ENCODE measurements at regions of chr12 and their contacts with region 1.

Region 1: GRCh38 chr12:120265473-120266179 is at the start of gene PXN:
- H3K4me3 Mint-ChIP-seq: peak within 1 kb of the TSS; percentile 94
- H3K27ac Mint-ChIP-seq: peak within 1 kb of the TSS; percentile 91
- H3K4me1 Mint-ChIP-seq: peaks cover 57% of the 10 kb centered on the region
- H3K27me3 Mint-ChIP-seq: peaks cover 2% of the 10 kb centered on the region

Region 2: GRCh38 chr12:120199595-120200306 is 65.9 kb before region 1 on chr12:
- intact Hi-C with region 1: loop called (anchors 2 kb)
- H3K4me3 Mint-ChIP-seq: peak overlapping the region; percentile 91
- H3K27ac Mint-ChIP-seq: peak overlapping the region; percentile 97
- H3K4me1 Mint-ChIP-seq: peaks cover 51% of the 10 kb centered on the region
- H3K27me3 Mint-ChIP-seq: no peaks in the 10 kb centered on the region

Region 3: GRCh38 chr12:120228291-120229070 is 37.1 kb before region 1 on chr12:
- intact Hi-C with region 1: loop called (anchors 1 kb)
- H3K4me3 Mint-ChIP-seq: peak overlapping the region; percentile 34
- H3K27ac Mint-ChIP-seq: peak overlapping the region; percentile 84
- H3K4me1 Mint-ChIP-seq: peaks cover 100% of the 10 kb centered on the region
- H3K27me3 Mint-ChIP-seq: no peaks in the 10 kb centered on the region

Region 4: DNA sequence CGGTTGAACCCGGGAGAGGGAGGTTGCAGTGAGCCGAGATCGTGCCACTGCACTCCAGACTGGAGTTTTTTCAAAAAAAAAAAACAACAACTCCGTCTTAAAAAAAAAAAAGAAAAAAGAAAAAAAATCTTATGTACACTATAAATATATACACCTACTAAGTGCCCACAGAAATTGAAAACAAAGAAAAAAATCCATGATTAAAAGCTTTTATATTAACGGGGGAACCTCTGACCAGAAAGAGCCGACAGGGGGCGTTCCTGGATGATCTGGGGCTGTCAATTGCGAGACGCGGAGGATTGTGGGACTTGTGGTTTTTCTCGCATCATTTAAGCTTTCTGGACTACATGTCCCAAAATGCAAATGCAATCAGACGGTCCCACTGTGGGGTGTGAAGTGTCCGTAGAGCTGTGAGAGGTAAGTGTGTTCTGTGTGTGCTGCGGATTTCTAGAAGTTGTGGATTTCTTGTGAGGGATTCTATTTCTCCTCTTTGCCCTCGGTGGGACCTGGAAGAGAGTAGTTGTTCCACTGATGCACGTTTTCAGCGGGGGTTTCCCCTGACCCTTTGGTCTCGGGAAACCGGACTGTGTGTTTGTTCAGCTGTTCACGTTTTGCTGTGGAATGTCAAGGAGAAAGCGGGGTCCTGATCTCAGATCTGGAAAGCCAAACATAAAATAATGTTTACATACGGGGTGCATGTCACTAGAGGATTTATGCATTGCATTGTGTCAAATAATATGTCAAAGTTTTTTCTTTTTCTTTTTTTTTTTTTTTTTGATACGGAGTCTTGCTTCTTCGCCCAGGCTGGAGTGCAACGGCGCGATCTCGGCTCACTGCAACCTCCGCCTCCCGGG is 36.6 kb after region 1 on chr12 and contains the start of gene SIRT4:
- intact Hi-C with region 1: no loop called
- H3K4me3 Mint-ChIP-seq: peak within 1 kb of the TSS; percentile 84
- H3K27ac Mint-ChIP-seq: peak within 1 kb of the TSS; percentile 86
- H3K4me1 Mint-ChIP-seq: peaks cover 5% of the 10 kb centered on the region
- H3K27me3 Mint-ChIP-seq: no peaks in the 10 kb centered on the region

Measured in dendritic cell treated with granulocyte-macrophage colony-stimulating factor and Interleukin-4, amounts not matched to agents 40 ng/mL and 50 ng/mL, for 4 days (primary cell).